PC-3 (cell line): ENCODE measurements at regions of chr15 and their contacts with region 1.

Region 1: DNA sequence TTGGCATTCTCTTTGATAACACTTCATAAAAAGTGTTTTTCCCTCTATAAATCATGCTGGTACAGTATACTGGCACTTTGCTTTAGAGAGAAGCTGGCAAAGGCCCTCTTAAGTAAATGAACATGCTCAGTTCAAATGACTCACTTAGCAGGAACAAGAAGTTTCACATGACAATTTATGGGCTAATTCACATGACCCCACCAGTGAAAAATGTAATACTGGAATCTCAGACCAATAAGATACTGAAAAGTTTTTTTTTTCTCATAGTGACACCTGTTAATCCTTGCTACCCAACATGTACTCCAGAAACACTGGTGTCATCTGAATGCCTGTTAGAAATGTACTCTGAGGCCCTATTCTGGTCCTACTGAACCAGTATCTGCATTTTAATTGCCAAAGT is 13.9 kb downstream of the BTBD1 start:
- DNase-seq: peak; percentile 60
- ATAC-seq: peak; percentile 89
- H3K4me3 ChIP-seq: no peak overlapping the region
- H3K27ac ChIP-seq: peak overlapping the region; percentile 34; the same call in 1 of the 2 replicates
- H3K4me1 ChIP-seq: peaks cover 11% of the 10 kb centered on the region
- H3K27me3 ChIP-seq: no peaks in the 10 kb centered on the region
- CTCF ChIP-seq: no peak

Region 2: DNA sequence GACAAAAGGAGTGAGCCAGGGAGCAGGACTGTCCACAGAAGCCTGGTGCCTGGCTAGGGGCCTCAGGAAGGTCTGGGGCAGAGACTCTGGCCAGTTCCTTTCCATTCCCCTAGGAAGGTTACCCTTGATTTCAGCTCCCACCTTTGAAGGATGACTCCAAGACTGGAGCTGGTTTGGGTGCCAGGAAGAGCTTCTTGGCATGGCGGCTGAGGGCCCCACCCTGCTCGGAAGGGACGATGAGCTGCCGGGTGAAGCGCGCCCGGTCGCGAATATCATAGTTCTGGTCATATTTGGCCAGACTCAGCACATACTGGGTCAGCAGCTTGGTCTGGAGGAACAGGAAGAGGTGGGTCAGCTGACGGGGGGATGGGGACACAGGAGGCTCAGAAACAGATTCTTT is 386.5 kb before region 1 on chr15:
- CTCF ChIA-PET with region 1: no interaction called
- POLR2A ChIA-PET with region 1: no interaction called
- intact Hi-C with region 1: no loop called
- DNase-seq: no peak
- ATAC-seq: no peak
- H3K4me3 ChIP-seq: no peak overlapping the region
- H3K27ac ChIP-seq: no peak overlapping the region
- H3K4me1 ChIP-seq: no peaks in the 10 kb centered on the region
- H3K27me3 ChIP-seq: peaks cover 7% of the 10 kb centered on the region
- CTCF ChIP-seq: no peak

Region 3: GRCh38 chr15:82812994-82813393 is 240.2 kb before region 1 on chr15:
- CTCF ChIA-PET with region 1: no interaction called
- POLR2A ChIA-PET with region 1: no interaction called
- intact Hi-C with region 1: no loop called
- DNase-seq: no peak
- ATAC-seq: no peak
- H3K4me3 ChIP-seq: no peak overlapping the region
- H3K27ac ChIP-seq: no peak overlapping the region
- H3K4me1 ChIP-seq: peaks cover 16% of the 10 kb centered on the region
- H3K27me3 ChIP-seq: no peaks in the 10 kb centered on the region
- CTCF ChIP-seq: no peak

Region 4: DNA sequence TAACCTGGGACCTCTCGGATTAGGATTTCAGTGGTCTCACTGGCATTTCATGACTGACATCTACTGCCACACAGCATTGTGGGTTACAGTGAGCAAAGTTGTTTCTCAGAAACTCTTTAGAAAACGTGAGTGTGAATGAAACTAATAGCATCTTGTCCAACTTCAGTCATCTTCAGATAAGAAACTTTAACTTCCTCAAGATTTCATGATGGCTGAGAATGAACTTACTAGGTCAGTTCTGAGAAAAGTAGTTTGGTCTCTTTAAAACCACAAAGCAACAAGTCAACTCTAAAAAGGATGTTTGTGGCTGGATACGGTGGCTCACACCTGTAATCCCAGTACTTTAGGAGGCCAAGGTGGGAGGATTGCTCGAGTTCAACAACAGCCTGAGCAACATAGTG is 86.5 kb before region 1 on chr15:
- CTCF ChIA-PET with region 1: no interaction called
- POLR2A ChIA-PET with region 1: no interaction called
- intact Hi-C with region 1: no loop called
- DNase-seq: no peak
- ATAC-seq: no peak
- H3K4me3 ChIP-seq: no peak overlapping the region
- H3K27ac ChIP-seq: no peak overlapping the region
- H3K4me1 ChIP-seq: no peaks in the 10 kb centered on the region
- H3K27me3 ChIP-seq: no peaks in the 10 kb centered on the region
- CTCF ChIP-seq: no peak

Region 5: DNA sequence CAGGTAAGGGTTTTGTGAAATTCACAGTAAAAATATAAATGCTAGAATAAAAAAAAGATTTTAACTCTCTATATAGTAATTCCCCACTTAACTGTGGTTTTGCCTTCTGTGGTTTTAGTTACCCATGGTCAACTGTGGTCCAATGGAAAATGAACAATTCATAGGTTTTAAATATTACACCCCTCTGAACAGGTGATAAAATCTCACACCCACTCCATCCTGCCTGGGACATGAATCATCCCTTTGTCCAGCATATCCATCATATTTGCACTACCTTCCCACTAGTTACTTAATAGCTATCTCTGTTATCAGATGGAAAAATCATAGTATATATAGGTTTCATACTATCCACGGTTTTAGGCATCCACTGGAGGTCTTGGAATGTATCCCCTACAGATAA is 105.2 kb after region 1 on chr15:
- CTCF ChIA-PET with region 1: no interaction called
- POLR2A ChIA-PET with region 1: no interaction called
- intact Hi-C with region 1: loop called (anchors 10 kb)
- DNase-seq: peak; percentile 69
- ATAC-seq: peak; percentile 82
- H3K4me3 ChIP-seq: no peak overlapping the region
- H3K27ac ChIP-seq: peak overlapping the region; percentile 19; the same call in 1 of the 2 replicates
- H3K4me1 ChIP-seq: peaks cover 26% of the 10 kb centered on the region
- H3K27me3 ChIP-seq: no peaks in the 10 kb centered on the region
- CTCF ChIP-seq: no peak